ENCODE measurements at regions of chr11 and their contacts with region 1.

Region 1: GRCh38 chr11:128630367-128631230 is 43.2 kb upstream of the ETS1 start:
- DNase-seq: peak; percentile 76
- H3K4me3 ChIP-seq: no peak overlapping the region
- H3K27ac ChIP-seq: no peak overlapping the region
- H3K27me3 ChIP-seq: peaks cover under 1% of the 10 kb centered on the region
- CTCF ChIP-seq: peak; percentile 94

Region 2: DNA sequence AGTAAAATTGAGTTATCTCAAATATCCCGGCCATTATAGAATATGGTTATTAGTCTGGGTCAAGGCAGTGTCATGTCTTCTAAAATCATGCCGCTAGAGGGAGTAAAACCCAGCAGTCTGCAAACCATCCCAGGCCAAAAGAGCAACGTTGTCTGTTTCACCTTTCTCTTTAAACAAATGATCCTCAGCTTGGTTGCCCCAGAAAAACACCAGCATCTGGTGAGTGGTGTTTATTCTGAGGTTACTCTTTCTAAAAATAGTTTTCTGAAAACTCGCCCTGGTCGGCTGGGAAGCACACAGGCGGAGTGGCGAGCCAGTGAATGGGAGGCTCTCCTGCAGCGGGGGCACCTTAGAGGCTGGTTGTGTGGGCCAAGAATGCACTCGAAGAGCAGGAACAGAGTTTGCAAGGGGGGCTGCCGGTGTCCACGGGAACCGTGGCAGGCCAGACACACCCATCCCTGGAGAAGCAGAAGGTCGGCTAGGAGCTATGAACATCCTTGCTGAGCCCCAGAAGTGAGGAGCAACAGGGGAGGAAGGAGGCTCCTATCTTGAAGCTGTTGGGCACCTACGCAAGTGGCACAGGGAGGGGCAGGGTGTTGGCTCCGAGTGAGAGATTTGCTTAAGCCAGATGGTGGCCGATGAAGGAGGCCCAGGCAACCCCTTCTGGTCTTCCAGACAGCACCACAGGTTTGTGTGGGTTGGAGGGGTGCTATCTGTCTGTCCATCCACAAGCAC is 340.3 kb before region 1 on chr11:
- CTCF ChIA-PET with region 1: interaction called, 258 read pairs
- POLR2A ChIA-PET with region 1: no interaction called
- DNase-seq: peak; percentile 88
- H3K4me3 ChIP-seq: no peak overlapping the region
- H3K27ac ChIP-seq: no peak overlapping the region
- H3K27me3 ChIP-seq: no peaks in the 10 kb centered on the region
- CTCF ChIP-seq: peak; percentile 87

Region 3: GRCh38 chr11:128399251-128400121 is 231.1 kb before region 1 on chr11:
- CTCF ChIA-PET with region 1: interaction called, 14 read pairs
- POLR2A ChIA-PET with region 1: no interaction called
- DNase-seq: no peak
- H3K4me3 ChIP-seq: no peak overlapping the region
- H3K27ac ChIP-seq: peak overlapping the region; percentile 33
- H3K27me3 ChIP-seq: no peaks in the 10 kb centered on the region
- CTCF ChIP-seq: no peak

Region 4: GRCh38 chr11:128483211-128483788 is 147.3 kb before region 1 on chr11:
- CTCF ChIA-PET with region 1: interaction called, 15 read pairs
- POLR2A ChIA-PET with region 1: no interaction called
- DNase-seq: no peak
- H3K4me3 ChIP-seq: no peak overlapping the region
- H3K27ac ChIP-seq: peak overlapping the region; percentile 32
- H3K27me3 ChIP-seq: no peaks in the 10 kb centered on the region
- CTCF ChIP-seq: no peak

Region 5: GRCh38 chr11:128530118-128531074 is 100.2 kb before region 1 on chr11:
- CTCF ChIA-PET with region 1: interaction called, 26 read pairs
- POLR2A ChIA-PET with region 1: no interaction called
- DNase-seq: peak; percentile 93
- H3K4me3 ChIP-seq: no peak overlapping the region
- H3K27ac ChIP-seq: peak overlapping the region; percentile 89
- H3K27me3 ChIP-seq: no peaks in the 10 kb centered on the region
- CTCF ChIP-seq: no peak

Region 6: DNA sequence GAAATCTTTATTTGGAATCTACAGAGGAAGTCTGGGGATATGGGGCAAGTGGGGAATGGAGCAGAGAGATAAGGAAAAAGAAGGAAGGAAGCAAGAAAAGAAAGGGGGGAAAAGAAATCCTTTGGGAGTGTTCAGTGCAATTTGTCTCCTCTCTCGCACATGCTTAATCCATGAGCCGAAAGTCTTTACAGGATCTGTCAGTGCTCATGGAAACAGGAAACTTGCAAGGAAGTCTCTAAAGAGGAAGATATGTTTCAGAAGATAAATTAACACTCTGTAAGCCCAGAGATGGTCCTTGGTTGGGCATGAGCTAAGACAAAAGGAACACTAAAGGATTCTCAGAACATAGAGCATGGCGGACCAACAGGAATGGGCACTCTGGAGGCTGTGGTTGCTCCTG is 15.4 kb after region 1 on chr11:
- CTCF ChIA-PET with region 1: interaction called, 14 read pairs
- POLR2A ChIA-PET with region 1: no interaction called
- DNase-seq: no peak
- H3K4me3 ChIP-seq: no peak overlapping the region
- H3K27ac ChIP-seq: no peak overlapping the region
- H3K27me3 ChIP-seq: peaks cover 20% of the 10 kb centered on the region
- CTCF ChIP-seq: no peak